CD8-positive, alpha-beta T cell (primary cell): ENCODE measurements at regions of chr9 and their contacts with region 1.

Region 1: GRCh38 chr9:137672907-137673791 is 54.3 kb downstream of the EHMT1 start:
- DNase-seq: peak in 7 of 9 experiments; percentile 21 to 73 (median 46)
- ATAC-seq: peak; percentile 90
- H3K4me3 ChIP-seq: no peak overlapping the region
- H3K4me3 Mint-ChIP-seq: no peak overlapping the region
- H3K27ac ChIP-seq: no peak overlapping the region
- H3K27ac Mint-ChIP-seq: peak overlapping the region; percentile 60
- H3K4me1 ChIP-seq: peaks cover 16% of the 10 kb centered on the region
- H3K4me1 Mint-ChIP-seq: peaks cover 51% of the 10 kb centered on the region
- H3K27me3 ChIP-seq: no peaks in the 10 kb centered on the region
- H3K27me3 Mint-ChIP-seq: no peaks in the 10 kb centered on the region
- CTCF ChIP-seq: peak; percentile 88

Region 2: DNA sequence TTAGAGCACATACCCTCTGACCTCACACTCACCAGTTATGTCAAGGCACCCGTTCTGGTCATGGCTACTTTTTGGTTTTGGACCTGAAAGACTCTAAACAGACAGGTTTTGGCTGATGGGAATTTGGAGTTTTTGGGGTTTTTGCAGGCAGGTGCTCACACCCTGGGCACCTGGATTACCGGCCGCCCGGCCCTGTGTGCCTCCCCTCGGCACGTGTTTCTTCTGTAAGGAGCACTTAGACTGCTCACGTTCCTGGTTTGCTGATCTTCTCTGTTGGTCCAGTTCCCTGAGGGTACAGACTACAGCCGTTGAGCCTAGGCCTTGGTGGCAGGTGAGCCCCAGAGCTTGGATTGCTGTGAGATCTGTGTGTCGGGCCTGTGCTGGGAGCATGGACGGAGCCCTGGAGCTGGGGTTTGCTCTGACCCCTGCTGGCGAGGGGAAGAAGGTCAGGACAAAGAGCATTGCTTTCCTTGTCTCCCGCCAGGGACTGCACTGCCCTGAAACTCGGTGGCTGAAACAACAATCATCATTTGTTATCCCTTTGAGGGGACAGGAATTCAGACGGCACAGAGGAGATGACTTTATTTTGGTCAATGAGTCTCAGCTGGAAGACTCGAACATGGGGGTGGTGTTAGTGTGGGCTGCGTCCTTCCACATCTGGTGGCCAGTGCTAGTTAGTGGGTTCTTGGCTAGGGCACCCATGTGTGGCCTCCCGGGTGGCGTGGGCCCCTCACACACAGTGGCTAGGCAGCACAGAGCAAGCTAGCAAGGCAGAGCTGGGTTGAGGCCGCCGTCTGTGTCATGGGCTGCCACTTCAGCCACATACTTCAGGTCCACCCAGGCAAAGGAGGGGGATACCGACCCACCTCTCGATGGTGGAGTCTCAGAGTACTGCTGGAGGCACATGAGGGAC is 22.1 kb after region 1 on chr9:
- CTCF ChIA-PET with region 1: interaction called, 11 read pairs
- POLR2A ChIA-PET with region 1: no interaction called
- intact Hi-C with region 1: no loop called
- DNase-seq: peak in 2 of 9 experiments; percentile 18 to 41
- ATAC-seq: peak; percentile 56
- H3K4me3 ChIP-seq: no peak overlapping the region
- H3K4me3 Mint-ChIP-seq: no peak overlapping the region
- H3K27ac ChIP-seq: no peak overlapping the region
- H3K27ac Mint-ChIP-seq: no peak overlapping the region
- H3K4me1 ChIP-seq: peaks cover 18% of the 10 kb centered on the region
- H3K4me1 Mint-ChIP-seq: peaks cover 64% of the 10 kb centered on the region
- H3K27me3 ChIP-seq: no peaks in the 10 kb centered on the region
- H3K27me3 Mint-ChIP-seq: no peaks in the 10 kb centered on the region
- CTCF ChIP-seq: peak; percentile 44

Region 3: GRCh38 chr9:137731947-137732813 is 59.0 kb after region 1 on chr9:
- CTCF ChIA-PET with region 1: no interaction called
- POLR2A ChIA-PET with region 1: no interaction called
- intact Hi-C with region 1: no loop called
- DNase-seq: no peak
- ATAC-seq: no peak
- H3K4me3 ChIP-seq: no peak overlapping the region
- H3K4me3 Mint-ChIP-seq: no peak overlapping the region
- H3K27ac ChIP-seq: no peak overlapping the region
- H3K27ac Mint-ChIP-seq: no peak overlapping the region
- H3K4me1 ChIP-seq: no peaks in the 10 kb centered on the region
- H3K4me1 Mint-ChIP-seq: peaks cover 13% of the 10 kb centered on the region
- H3K27me3 ChIP-seq: no peaks in the 10 kb centered on the region
- H3K27me3 Mint-ChIP-seq: no peaks in the 10 kb centered on the region
- CTCF ChIP-seq: no peak

Region 4: DNA sequence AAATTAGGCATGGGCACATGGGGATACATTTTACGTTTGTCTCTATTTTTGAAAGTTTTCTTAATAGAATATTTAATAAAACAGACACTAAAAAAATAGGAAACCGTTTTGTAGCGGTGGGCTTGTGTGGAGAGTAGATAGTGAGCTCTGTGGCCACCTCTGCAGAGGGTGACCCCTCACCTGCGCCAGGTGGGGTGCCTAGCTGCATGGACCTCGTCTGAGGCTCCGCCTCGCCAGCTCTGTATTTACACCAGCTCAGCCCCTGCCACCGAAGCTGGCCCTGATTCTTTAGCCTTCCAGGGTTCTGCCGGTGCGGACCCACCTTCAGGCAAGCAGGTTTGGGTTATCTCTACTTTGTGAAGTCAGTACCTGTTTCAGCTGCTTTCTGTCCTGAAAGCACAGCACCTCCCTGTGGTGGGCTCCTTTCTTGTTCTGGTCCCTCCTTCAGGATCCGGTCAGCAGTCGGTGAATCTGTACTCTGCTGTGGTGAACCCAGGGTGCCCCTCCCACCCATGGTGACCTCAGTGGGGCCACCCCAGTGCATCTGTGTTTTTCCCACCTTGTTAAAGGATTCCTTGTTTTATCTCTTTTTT is 99.2 kb after region 1 on chr9:
- CTCF ChIA-PET with region 1: interaction called, 4 read pairs
- POLR2A ChIA-PET with region 1: no interaction called
- intact Hi-C with region 1: loop called (anchors 2 to 5 kb)
- DNase-seq: no peak
- ATAC-seq: no peak
- H3K4me3 ChIP-seq: no peak overlapping the region
- H3K4me3 Mint-ChIP-seq: no peak overlapping the region
- H3K27ac ChIP-seq: no peak overlapping the region
- H3K27ac Mint-ChIP-seq: peak overlapping the region; percentile 29
- H3K4me1 ChIP-seq: no peaks in the 10 kb centered on the region
- H3K4me1 Mint-ChIP-seq: peaks cover 1% of the 10 kb centered on the region
- H3K27me3 ChIP-seq: no peaks in the 10 kb centered on the region
- H3K27me3 Mint-ChIP-seq: no peaks in the 10 kb centered on the region
- CTCF ChIP-seq: no peak